Mammary epithelial cell (primary cell): ENCODE measurements at regions of chr19 and their contacts with region 1.

Region 1: DNA sequence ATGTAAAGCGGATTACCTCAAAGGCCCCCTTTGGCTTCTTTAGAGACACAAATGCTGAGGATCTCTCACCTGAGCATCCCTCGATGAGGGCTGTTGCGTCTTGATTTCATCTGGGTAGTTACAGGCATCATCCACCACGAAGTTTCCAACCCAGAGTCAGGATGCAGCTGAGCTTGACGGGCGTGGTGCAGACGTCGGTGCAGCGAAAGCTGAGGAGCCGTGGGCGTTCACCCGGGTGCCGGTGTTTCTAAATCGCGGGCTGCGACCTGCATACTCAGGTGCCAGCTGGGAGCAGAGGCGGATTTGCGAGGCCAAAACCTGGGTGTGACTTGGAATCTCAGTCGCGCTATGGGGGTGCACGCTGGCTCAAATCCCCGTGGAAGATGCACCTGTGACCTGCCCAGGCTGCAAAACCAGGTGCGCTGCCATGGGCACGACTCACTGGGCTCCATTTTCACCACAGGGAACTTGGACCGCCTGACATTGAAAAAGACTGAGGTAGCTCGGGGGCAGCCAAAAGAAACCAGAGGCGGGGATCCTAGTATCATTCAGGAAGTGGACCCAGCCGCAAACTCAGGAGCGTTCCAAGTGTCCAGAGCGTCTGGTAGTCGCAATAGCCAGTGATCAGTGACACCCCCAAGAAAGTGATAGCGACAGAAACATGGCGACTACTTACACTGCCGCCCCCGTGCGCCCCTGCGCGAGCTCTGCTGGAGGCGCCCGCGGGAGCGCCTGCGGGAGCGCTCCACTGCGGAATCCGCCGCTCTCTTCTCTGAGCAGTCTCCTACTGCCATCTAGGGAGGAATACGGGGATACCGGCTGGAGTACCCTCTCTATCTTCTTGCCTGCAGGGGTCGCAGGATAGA is 36.4 kb upstream of the IGFL4 start:
- DNase-seq: peak; percentile 69
- H3K4me3 ChIP-seq: peak overlapping the region; percentile 38 to 52 (median 51)
- H3K27ac ChIP-seq: no peak overlapping the region
- H3K4me1 ChIP-seq: peaks cover 27% of the 10 kb centered on the region
- H3K27me3 ChIP-seq: no peaks in the 10 kb centered on the region
- CTCF ChIP-seq: peak; percentile 100

Region 2: DNA sequence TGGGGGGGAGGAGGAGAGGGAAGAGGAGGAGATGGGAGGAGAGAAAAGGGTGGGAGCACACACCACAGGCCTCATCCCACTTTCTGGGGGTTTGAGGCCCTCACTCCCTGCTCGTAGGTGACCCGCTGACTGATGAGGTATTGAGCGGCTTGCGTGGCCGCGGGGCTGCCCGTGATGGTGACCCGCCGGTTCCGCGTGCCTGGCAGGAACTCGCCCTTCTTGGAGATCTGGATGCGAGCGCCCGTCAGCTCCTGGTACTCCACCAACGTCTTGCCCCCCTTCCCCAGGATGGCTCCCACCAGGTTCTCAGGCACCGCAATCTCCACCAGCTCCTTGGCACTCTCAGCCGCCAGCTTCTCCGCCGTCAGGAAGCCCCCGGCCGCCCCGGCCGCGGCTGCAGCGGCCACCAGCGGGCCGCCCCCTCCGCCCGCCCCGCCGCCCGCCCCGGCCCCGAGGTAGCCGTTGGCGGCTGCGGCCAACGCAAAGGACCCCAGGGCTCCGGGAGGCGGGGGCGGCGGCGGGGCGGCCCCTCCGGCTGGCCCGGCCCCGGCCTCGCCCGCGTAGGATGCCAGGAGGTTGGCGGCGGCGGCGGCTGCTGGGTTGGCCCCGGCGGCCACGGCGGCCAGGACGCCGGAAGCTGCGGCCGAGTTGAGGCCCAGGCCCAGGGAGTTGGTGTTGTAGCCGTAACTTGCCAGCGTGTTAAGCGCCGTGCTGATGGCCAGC is 137.2 kb before region 1 on chr19:
- CTCF ChIA-PET with region 1: no interaction called
- dilution Hi-C with region 1: no loop called
- in situ Hi-C with region 1: no loop called
- intact Hi-C with region 1: no loop called
- DNase-seq: no peak
- H3K4me3 ChIP-seq: no peak overlapping the region
- H3K27ac ChIP-seq: no peak overlapping the region
- H3K4me1 ChIP-seq: peaks cover 5% of the 10 kb centered on the region
- H3K27me3 ChIP-seq: peaks cover 1% of the 10 kb centered on the region
- CTCF ChIP-seq: no peak

Region 3: GRCh38 chr19:46025835-46026234 is 51.3 kb before region 1 on chr19:
- CTCF ChIA-PET with region 1: interaction called, 8 read pairs
- dilution Hi-C with region 1: no loop called
- in situ Hi-C with region 1: loop called (anchors 5 kb)
- intact Hi-C with region 1: loop called (anchors 1 kb)
- DNase-seq: no peak
- H3K4me3 ChIP-seq: no peak overlapping the region
- H3K27ac ChIP-seq: no peak overlapping the region
- H3K4me1 ChIP-seq: peaks cover 10% of the 10 kb centered on the region
- H3K27me3 ChIP-seq: no peaks in the 10 kb centered on the region
- CTCF ChIP-seq: no peak

Region 4: DNA sequence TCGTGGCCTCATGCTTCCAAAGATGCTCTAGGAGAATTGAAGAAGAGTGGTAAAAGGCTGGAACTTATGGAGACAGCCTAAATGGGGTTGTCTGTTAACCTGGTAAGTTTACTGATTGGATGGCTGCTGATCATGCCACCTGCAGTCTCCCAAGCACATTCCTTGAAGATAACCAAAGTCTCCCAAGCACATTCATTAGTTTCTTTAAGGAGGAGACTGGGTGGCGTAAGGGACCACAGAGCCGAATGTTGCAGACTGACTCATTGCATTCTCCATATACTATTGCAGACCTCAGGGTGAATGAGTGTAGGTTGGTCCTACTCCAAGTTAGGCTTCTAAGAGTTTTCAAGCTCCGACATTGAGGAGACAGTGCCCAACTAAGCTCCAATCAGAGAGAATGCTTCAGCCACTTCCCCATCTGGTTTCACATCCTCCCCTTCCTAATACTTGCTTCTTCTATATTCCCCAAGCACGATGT is 47.5 kb after region 1 on chr19 and contains the start of gene IGFL3:
- CTCF ChIA-PET with region 1: no interaction called
- dilution Hi-C with region 1: no loop called
- in situ Hi-C with region 1: loop called in 1 of 2 experiments (anchors 5 kb)
- intact Hi-C with region 1: loop called (anchors 2 kb)
- DNase-seq: peak; percentile 66
- H3K4me3 ChIP-seq: no peak within 1 kb of the TSS
- H3K27ac ChIP-seq: peak within 1 kb of the TSS; percentile 27
- H3K4me1 ChIP-seq: peaks cover 27% of the 10 kb centered on the region
- H3K27me3 ChIP-seq: no peaks in the 10 kb centered on the region
- CTCF ChIP-seq: no peak
- total RNA-seq, gene IGFL3: 62.8 to 295 TPM

Region 5: DNA sequence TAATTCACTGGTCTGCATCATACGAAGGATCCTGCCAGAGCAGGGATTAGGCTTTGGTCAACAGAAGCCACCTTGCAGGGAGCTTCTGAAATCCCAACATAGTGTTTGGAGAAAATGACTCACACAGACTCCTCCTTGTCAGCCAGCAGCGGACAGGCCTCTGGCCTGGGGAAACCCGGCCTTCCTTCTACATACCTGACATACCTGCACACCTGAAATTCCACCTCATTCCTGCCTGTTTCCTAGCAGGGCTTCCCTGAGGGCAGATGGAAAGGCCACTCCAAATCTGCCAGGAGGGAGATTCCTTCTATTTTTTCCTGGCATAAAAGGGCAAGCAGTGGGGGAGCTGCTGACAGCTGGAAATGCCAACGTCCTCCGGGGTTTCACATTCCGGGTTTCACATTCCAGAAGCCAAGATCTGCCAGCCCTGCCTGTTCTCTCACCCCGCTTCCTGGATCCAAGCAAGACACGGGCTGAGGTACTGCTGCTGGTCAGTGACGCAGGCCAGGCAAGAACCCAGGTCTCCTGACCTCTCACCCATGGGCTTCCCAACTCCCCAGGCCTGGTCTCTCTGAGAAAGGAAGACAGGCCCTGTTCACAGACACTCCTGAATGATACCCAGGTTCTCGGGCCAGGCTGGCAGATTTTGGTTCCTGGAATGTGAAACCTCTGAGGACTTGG is 134.2 kb after region 1 on chr19:
- CTCF ChIA-PET with region 1: interaction called, 5 read pairs
- dilution Hi-C with region 1: no loop called
- in situ Hi-C with region 1: no loop called
- intact Hi-C with region 1: loop called (anchors 1 kb)
- DNase-seq: peak; percentile 89
- H3K4me3 ChIP-seq: no peak overlapping the region
- H3K27ac ChIP-seq: peak overlapping the region; percentile 58
- H3K4me1 ChIP-seq: peaks cover 58% of the 10 kb centered on the region
- H3K27me3 ChIP-seq: no peaks in the 10 kb centered on the region
- CTCF ChIP-seq: no peak

Region 6: DNA sequence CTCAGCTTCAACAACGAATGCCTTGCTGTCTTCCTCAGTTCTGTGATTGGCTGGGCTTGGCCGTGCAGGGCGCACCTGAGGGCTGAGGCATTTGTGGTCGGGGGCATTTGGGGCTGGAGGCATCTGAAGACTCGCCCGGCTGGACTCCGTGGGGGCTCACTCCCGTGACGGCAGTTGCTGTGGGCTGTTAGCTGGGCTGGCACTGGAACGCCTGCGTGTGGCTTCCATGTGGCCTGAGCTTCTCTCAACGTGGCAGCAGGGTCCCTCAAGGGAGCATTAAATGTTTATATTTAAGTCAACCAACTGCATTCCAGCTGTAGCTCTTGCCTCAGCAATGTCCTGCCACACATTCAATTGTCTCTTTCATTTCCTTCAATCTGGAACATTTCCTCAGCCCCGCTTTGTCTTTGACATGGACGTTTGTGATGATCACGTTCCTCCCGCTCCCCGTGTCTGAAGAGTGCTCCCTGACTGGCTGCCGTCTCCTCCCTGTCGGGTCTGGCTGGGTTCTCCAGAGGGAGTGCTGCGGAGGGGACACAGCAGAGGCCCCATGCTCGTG is 315.1 kb after region 1 on chr19:
- CTCF ChIA-PET with region 1: interaction called, 10 read pairs
- dilution Hi-C with region 1: no loop called
- in situ Hi-C with region 1: no loop called
- intact Hi-C with region 1: no loop called
- DNase-seq: no peak
- H3K4me3 ChIP-seq: no peak overlapping the region
- H3K27ac ChIP-seq: no peak overlapping the region
- H3K4me1 ChIP-seq: no peaks in the 10 kb centered on the region
- H3K27me3 ChIP-seq: no peaks in the 10 kb centered on the region
- CTCF ChIP-seq: no peak